ENCODE measurements at regions of chr11 and their contacts with region 1.

Region 1: GRCh38 chr11:4187055-4187988 is 92.7 kb downstream of the RRM1 start:
- DNase-seq: peak; percentile 61 to 89 (median 80)
- ATAC-seq: peak; percentile 90
- H3K4me3 ChIP-seq: peak overlapping the region; percentile 51
- H3K4me3 Mint-ChIP-seq: peak overlapping the region; percentile 80
- H3K27ac ChIP-seq: no peak overlapping the region
- H3K27ac Mint-ChIP-seq: no peak overlapping the region
- H3K4me1 ChIP-seq: peaks cover 9% of the 10 kb centered on the region
- H3K4me1 Mint-ChIP-seq: no peaks in the 10 kb centered on the region
- H3K27me3 ChIP-seq: no peaks in the 10 kb centered on the region
- H3K27me3 Mint-ChIP-seq: no peaks in the 10 kb centered on the region
- CTCF ChIP-seq: peak; percentile 89

Region 2: DNA sequence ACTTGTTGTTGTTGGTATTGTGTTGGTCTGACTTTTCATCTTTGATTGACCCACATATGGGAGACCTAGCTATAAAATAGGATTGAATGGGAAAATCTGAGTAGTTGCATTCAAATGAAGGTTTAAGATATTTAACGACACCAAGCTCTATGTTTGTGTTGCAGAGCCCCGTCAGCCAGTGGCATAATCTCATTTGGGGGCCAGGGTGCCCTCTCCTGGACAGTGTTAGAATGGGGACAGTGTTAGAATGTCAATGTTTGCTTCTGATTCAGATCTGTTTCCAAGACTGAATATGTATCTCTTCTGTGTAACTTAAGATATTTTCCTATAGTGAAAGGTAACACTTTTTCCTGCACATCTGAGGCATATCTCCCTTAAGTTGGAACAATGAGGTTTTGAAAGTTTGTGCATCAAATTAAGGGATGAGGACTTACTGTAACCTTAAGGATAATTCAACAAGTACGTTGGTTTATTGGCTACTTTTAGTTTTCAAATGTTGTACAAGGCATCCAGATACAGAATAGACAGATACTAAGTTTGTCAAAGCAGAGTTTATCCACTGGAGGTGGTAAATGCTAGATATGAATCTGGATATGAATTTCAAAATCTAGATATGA is 352.4 kb after region 1 on chr11:
- CTCF ChIA-PET with region 1: interaction called, 25 read pairs
- POLR2A ChIA-PET with region 1: no interaction called
- intact Hi-C with region 1: loop called (anchors 1 kb)
- DNase-seq: peak in 13 of 14 experiments; percentile 11 to 64 (median 33)
- ATAC-seq: peak; percentile 59
- H3K4me3 ChIP-seq: no peak overlapping the region
- H3K4me3 Mint-ChIP-seq: no peak overlapping the region
- H3K27ac ChIP-seq: no peak overlapping the region
- H3K27ac Mint-ChIP-seq: no peak overlapping the region
- H3K4me1 ChIP-seq: no peaks in the 10 kb centered on the region
- H3K4me1 Mint-ChIP-seq: no peaks in the 10 kb centered on the region
- H3K27me3 ChIP-seq: no peaks in the 10 kb centered on the region
- H3K27me3 Mint-ChIP-seq: peaks cover 25% of the 10 kb centered on the region
- CTCF ChIP-seq: peak; percentile 59

Region 3: DNA sequence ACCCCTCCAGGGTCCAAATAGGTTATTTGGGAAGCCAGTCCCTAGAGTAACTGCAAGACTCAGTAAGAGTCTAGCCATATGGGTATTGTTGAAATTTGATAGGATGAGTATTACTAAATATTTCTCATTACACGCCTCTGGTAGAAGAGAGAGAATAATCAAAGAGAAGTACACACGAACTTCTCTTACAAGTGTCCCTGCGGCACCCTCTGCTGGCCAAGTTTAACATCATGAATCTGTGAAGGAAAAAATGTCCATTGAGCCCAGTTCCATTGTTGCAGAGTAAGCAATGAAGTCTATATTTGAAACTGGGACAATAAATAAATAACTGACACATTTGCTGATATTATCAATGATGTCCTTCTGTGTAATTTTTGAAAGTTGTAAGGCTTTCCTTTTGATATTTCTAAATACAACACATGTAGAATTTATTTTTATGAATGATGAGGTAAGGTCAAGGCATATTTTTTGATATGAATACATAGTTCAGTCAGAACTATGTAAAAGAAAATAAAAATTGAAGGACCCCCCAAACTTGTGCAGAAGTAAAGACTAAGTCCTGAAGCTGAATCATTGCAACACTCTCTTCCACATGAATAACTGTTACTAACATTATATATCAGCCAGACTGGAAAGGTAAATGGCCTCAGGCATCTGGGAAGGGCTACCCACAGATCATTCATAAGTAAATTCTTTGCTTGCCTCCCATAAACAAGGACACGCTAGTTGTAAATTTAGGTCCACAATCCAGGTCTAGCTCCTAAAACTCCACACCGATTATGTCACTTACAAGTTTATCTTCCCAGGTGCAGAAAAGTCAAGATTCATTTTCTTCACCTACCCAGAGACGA is 817.3 kb after region 1 on chr11:
- CTCF ChIA-PET with region 1: no interaction called
- POLR2A ChIA-PET with region 1: no interaction called
- intact Hi-C with region 1: loop called in 1 of 2 experiments (anchors 5 kb)
- DNase-seq: peak in 3 of 14 experiments; percentile 1 to 10 (median 8)
- ATAC-seq: no peak
- H3K4me3 ChIP-seq: no peak overlapping the region
- H3K4me3 Mint-ChIP-seq: no peak overlapping the region
- H3K27ac ChIP-seq: no peak overlapping the region
- H3K27ac Mint-ChIP-seq: no peak overlapping the region
- H3K4me1 ChIP-seq: no peaks in the 10 kb centered on the region
- H3K4me1 Mint-ChIP-seq: no peaks in the 10 kb centered on the region
- H3K27me3 ChIP-seq: no peaks in the 10 kb centered on the region
- H3K27me3 Mint-ChIP-seq: peaks cover 18% of the 10 kb centered on the region
- CTCF ChIP-seq: no peak

Region 4: DNA sequence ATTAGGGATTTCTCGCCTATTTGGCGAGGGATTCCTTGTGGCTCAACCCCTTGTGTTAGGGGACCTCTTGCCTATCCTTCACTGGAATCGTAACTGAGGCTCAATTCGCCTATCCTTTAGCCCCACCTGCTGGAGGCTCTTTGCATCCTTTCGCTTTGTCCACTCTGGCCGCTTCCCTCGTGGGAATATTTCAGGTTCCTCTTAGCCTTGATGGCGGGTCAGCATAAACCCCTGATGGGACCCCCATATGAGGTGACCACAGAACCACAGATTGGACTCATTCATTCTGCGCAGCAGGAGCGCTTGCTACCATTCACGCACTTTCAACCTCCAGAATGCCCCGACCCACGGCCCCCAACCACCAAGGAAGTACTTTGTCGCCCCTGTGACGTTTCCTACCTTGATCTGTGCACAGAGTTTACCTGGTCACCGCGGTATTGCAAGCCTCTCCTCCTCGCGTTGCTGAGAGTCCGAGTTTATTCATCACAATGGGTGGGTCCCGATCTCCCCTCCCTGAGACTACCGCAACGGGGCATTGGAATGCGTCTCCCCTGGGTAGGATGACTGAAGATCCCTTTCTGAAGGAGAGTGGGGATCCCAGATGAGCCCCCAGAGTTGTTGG is 1621.3 kb after region 1 on chr11 and contains the start of gene OR52N2:
- CTCF ChIA-PET with region 1: no interaction called
- POLR2A ChIA-PET with region 1: no interaction called
- intact Hi-C with region 1: loop called (anchors 2 to 10 kb)
- DNase-seq: peak; percentile 46 to 85 (median 63)
- ATAC-seq: peak; percentile 78
- H3K4me3 ChIP-seq: peak within 1 kb of the TSS; percentile 55
- H3K4me3 Mint-ChIP-seq: peak within 1 kb of the TSS; percentile 89
- H3K27ac ChIP-seq: no peak within 1 kb of the TSS
- H3K27ac Mint-ChIP-seq: no peak within 1 kb of the TSS
- H3K4me1 ChIP-seq: peaks cover 8% of the 10 kb centered on the region
- H3K4me1 Mint-ChIP-seq: peaks cover 6% of the 10 kb centered on the region
- H3K27me3 ChIP-seq: peaks cover 0 to 8% of the 10 kb centered on the region in 2 experiments
- H3K27me3 Mint-ChIP-seq: peaks cover 38% of the 10 kb centered on the region
- CTCF ChIP-seq: peak; percentile 86
- total RNA-seq, gene OR52N2: not detected